GM10248 (cell line): ENCODE measurements at regions of chr5 and their contacts with region 1.

Region 1: GRCh38 chr5:108181975-108182374 is 199.9 kb downstream of the FBXL17 start:
- DNase-seq: no peak
- CTCF ChIP-seq: no peak

Region 2: DNA sequence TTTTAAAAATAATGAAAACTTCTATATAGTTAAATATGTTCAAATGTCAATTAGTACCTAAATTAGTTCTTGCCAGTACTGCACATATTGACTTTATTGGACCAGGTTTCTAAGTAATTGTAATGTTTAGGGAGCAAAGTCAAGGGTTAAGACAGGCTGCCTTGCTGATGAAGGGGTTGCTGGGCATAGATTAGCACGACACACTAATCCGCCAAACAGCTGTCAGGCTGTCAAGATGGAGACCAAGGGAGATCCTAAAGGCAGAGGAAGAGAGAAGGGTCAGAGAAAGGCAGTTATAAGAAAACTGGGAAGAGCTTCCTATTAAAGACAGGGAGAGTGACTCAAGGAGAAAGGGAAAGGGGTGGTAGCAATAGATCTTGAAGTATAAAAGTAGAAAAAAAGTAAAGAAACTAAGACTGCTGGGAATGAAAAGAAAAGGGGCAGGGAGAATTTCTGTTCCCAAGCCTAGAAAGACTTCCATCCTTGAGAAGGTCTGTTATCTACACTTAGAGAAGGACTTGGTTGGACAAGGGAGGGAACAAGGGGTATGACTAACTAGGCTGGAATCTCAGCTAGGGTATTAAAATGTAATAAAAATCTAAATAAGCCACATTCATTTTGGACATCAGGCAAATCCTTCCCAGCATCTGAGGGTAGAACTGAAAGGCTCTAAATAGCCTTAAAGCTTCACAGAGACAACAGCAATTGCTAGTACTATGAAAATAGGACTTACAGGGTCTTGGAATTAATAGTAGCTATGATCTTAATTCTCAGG is 11.2 kb after region 1 on chr5:
- CTCF ChIA-PET with region 1: interaction called, 10 read pairs
- POLR2A ChIA-PET with region 1: no interaction called
- DNase-seq: no peak
- CTCF ChIP-seq: no peak

Region 3: DNA sequence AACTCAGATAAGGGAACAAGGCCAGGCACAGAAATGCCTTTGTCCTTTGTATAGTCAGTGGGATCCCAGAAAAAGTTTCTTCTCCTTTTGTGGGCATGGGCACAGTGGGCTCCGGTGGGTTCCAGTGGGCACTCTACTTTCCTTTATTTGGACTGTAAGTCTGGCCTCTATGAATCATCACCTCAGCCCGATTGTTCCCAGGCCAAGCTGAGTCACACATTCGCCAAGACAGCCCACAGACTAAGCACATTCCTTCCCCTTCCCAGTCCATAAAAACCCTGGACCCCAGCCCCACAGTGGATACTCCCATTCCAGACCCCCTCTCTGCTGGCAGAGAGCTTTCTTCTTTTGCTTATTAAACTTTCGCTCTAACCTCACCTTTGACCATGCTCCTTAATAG is 34.9 kb after region 1 on chr5:
- CTCF ChIA-PET with region 1: no interaction called
- POLR2A ChIA-PET with region 1: no interaction called
- DNase-seq: no peak
- CTCF ChIP-seq: no peak